ENCODE measurements at regions of chr19 and their contacts with region 1.

Region 1: GRCh38 chr19:2084993-2085720 is 11.0 kb downstream of the MOB3A start:
- DNase-seq: peak; percentile 72 to 99 (median 96)
- ATAC-seq: peak; percentile 64 to 78
- H3K4me3 Mint-ChIP-seq: peak overlapping the region; percentile 94 to 100 (median 98)
- H3K27ac Mint-ChIP-seq: peak overlapping the region; percentile 94 to 100 (median 99)
- H3K4me1 Mint-ChIP-seq: peaks cover 42 to 84% (median 75%) of the 10 kb centered on the region in 4 donors
- H3K27me3 Mint-ChIP-seq: peaks cover 0 to 2% (median 0%) of the 10 kb centered on the region in 5 donors

Region 2: DNA sequence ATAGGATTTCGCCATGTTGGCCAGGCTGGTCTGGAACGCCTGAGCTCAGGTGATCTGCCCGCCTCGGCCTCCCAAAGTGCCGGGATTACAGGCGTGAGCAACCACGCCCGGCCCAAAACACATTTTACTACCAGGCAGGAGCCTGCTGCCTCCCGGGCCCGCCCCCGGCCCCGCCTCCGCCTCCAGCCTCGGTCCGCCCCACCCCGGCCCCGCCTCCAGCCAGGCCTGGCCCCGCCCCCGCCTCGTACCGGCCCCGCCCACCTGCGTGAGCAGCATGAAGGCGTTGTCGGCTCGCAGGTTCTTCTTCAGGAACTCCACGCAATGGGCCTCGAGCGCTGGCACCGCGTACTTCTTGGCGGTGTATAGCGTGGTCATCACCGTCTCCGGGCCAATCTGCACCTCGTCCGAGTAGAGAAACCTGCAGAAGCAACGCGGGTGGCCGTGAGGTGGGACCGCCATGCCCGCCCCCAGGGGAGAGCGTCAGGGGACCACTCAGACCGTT is 92.3 kb before region 1 on chr19:
- POLR2A ChIA-PET with region 1: no interaction called
- DNase-seq: peak in 2 of 10 donors; percentile 9 to 35
- ATAC-seq: no peak
- H3K4me3 Mint-ChIP-seq: no peak overlapping the region
- H3K27ac Mint-ChIP-seq: peak overlapping the region in 1 of 10 donors; percentile 72
- H3K4me1 Mint-ChIP-seq: peaks cover 0 to 3% (median 1%) of the 10 kb centered on the region in 4 donors
- H3K27me3 Mint-ChIP-seq: no peaks in the 10 kb centered on the region

Region 3: GRCh38 chr19:2032296-2032941 is 52.7 kb before region 1 on chr19:
- POLR2A ChIA-PET with region 1: interaction called, 21 read pairs
- DNase-seq: peak in 1 of 10 donors; percentile 50
- ATAC-seq: peak; percentile 39 to 46
- H3K4me3 Mint-ChIP-seq: peak overlapping the region; percentile 55 to 90 (median 76)
- H3K27ac Mint-ChIP-seq: peak overlapping the region; percentile 80 to 95 (median 86)
- H3K4me1 Mint-ChIP-seq: peaks cover 16 to 33% (median 28%) of the 10 kb centered on the region in 4 donors
- H3K27me3 Mint-ChIP-seq: no peaks in the 10 kb centered on the region

Region 4: DNA sequence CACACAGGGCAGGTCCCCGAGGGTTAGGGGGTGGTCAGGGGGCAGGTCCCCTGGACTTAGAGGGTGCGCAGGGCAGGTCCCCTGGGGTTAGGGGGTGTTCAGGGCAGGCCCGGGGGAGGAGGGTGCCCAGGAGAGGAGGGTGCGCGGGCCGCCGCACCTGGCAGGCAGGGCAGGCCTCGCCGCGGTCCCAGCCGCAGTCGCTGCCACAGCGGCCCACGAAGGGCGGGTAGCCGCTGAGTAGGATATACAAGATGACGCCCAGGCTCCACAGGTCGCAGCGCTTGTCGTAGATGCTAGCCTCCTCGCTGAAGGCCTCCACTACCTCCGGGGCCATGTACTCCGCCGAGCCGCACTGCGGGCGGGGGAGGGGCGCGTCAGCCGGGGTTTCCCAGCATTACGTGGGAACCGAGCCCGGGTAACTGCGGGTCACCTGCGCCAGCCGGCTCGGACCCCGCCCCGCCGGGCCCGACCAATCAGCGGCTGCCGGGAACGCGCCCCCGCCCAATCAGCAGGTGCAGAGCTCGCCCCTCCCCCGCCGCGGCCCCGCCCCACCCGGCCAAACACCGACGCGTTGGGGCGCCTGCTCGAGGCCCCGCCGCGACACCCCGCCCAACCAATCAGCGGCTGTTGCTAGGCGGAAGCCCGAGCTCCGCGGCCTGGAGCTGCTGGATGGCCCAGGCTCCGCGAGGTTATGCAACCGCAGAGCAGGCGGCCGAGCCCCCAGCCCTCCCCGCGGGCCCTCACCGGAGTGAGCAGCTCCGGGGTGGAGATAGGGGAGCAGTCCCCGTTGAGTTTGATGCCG is 43.3 kb before region 1 on chr19:
- POLR2A ChIA-PET with region 1: interaction called, 72 read pairs
- DNase-seq: peak; percentile 97 to 100 (median 99)
- ATAC-seq: peak; percentile 83 to 85
- H3K4me3 Mint-ChIP-seq: peak overlapping the region in 9 of 10 donors; percentile 56 to 80 (median 63)
- H3K27ac Mint-ChIP-seq: peak overlapping the region in 9 of 10 donors; percentile 48 to 98 (median 95)
- H3K4me1 Mint-ChIP-seq: peaks cover 9 to 44% (median 42%) of the 10 kb centered on the region in 4 donors
- H3K27me3 Mint-ChIP-seq: no peaks in the 10 kb centered on the region

Region 5: GRCh38 chr19:2050991-2051772 is 34.0 kb before region 1 on chr19 and contains the start of gene MKNK2:
- POLR2A ChIA-PET with region 1: interaction called, 130 read pairs
- DNase-seq: peak; percentile 85 to 99 (median 96)
- ATAC-seq: peak; percentile 76
- H3K4me3 Mint-ChIP-seq: peak within 1 kb of the TSS; percentile 80 to 92 (median 88)
- H3K27ac Mint-ChIP-seq: peak within 1 kb of the TSS; percentile 83 to 97 (median 96)
- H3K4me1 Mint-ChIP-seq: peaks cover 19 to 63% (median 56%) of the 10 kb centered on the region in 4 donors
- H3K27me3 Mint-ChIP-seq: no peaks in the 10 kb centered on the region
- polyA plus RNA-seq, gene MKNK2: 26.1 to 47.1 (median 30.2) TPM

Region 6: DNA sequence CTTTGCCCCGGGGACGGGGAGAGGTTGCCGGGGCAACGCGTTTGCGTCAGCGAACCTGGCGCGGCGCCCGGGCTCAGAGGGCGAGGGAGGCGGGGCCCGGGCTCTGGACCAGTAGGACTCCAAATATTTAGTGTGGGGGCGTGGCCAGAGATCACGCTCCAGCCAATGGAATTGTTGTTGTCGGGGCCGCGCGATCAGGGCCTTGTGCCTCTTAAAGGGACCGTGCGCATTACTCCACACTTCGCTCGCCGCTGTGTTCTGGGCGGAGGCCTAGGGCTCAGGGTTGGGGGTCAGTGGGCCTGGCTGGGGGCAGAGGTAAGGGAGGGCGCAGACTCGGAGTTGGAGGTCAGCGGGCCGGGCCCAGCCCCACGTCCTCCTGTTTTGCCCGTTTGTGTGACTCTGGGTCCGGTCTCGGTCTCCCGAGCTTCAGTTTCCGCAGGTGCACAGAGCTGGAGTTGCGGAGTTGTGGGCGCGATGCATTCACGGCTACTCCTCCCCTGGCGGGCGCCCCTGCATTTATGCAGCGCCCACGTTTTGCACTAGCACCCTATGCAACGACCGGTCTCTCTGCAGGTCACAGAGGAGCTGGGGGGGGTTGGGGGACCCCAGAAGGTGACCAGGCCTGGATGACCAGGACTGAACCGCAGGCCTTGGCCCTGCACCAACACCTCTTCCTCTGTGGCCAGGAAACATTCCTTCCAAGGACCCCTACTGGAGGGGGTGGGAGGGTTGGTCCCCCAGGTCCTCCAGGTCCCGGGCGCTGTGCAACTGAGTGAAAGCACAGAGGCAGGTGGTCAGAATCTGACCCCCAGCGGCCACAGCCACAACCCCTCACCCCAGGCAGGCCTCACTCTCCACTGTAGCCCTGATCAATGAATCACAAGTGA is 23.4 kb before region 1 on chr19:
- POLR2A ChIA-PET with region 1: interaction called, 38 read pairs
- DNase-seq: peak; percentile 99 to 100 (median 100)
- ATAC-seq: peak; percentile 89 to 93
- H3K4me3 Mint-ChIP-seq: peak overlapping the region; percentile 86 to 96 (median 92)
- H3K27ac Mint-ChIP-seq: peak overlapping the region; percentile 87 to 98 (median 98)
- H3K4me1 Mint-ChIP-seq: peaks cover 8 to 56% (median 38%) of the 10 kb centered on the region in 4 donors
- H3K27me3 Mint-ChIP-seq: no peaks in the 10 kb centered on the region

Region 7: GRCh38 chr19:2070436-2070827 is 14.7 kb before region 1 on chr19:
- POLR2A ChIA-PET with region 1: interaction called, 73 read pairs
- DNase-seq: no peak
- ATAC-seq: peak in 1 of 2 donors; percentile 8
- H3K4me3 Mint-ChIP-seq: no peak overlapping the region
- H3K27ac Mint-ChIP-seq: peak overlapping the region in 5 of 10 donors; percentile 56 to 91 (median 87)
- H3K4me1 Mint-ChIP-seq: peaks cover 10 to 46% (median 29%) of the 10 kb centered on the region in 4 donors
- H3K27me3 Mint-ChIP-seq: no peaks in the 10 kb centered on the region

Region 8: GRCh38 chr19:2199215-2199614 is 114.1 kb after region 1 on chr19:
- POLR2A ChIA-PET with region 1: no interaction called
- DNase-seq: no peak
- ATAC-seq: no peak
- H3K4me3 Mint-ChIP-seq: no peak overlapping the region
- H3K27ac Mint-ChIP-seq: no peak overlapping the region
- H3K4me1 Mint-ChIP-seq: peaks cover 4 to 13% (median 9%) of the 10 kb centered on the region in 4 donors
- H3K27me3 Mint-ChIP-seq: no peaks in the 10 kb centered on the region